Psoas muscle (tissue), 8 donors: ENCODE measurements at regions of chr2 and their contacts with region 1.

Region 1: GRCh38 chr2:144454466-144455287 is 65.2 kb downstream of the ZEB2 start:
- DNase-seq: no peak
- ATAC-seq: no peak
- H3K4me3 ChIP-seq: no peak overlapping the region
- H3K27ac ChIP-seq: no peak overlapping the region
- H3K4me1 ChIP-seq: peaks cover 40% of the 10 kb centered on the region
- H3K27me3 ChIP-seq: no peaks in the 10 kb centered on the region
- CTCF ChIP-seq: no peak

Region 2: DNA sequence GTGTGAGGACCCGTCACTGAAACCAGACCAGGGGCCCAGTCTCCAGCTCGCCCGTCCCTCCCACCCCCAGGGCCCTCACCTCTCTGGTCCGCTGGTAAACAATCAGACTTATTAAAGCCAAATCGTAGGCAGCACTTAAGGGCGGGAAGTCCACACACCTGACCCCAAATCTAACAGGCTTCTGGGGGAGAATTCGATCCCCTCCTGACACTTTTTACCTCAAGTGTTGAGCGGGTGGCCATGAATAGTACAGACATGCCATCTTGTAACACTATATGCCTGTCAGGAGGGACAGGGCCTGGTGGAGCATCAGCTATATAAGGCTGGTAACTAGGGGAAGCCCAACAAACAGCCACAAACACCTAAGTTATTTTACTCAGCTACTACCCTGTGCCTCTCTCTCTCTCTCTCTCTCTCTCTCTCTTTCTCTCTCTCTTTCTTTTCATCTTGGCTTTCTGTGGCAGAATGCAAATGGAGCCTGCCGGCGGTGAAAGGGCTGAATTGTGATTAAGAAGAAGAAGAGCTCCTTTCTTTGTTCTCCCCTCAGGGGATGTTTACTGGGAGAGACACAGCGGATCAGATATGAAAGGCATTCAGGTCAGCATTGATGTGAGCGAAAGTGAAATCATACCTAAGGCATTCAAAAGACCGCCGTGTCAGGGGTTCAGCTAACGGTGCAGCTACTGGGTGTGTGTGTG is 55.8 kb after region 1 on chr2:
- intact Hi-C with region 1: loop called in 1 of 2 experiments (anchors 2 kb)
- DNase-seq: no peak
- ATAC-seq: peak; percentile 76 to 89 (median 82)
- H3K4me3 ChIP-seq: peak overlapping the region; percentile 89
- H3K27ac ChIP-seq: peak overlapping the region; percentile 96
- H3K4me1 ChIP-seq: peaks cover 64% of the 10 kb centered on the region
- H3K27me3 ChIP-seq: no peaks in the 10 kb centered on the region
- CTCF ChIP-seq: no peak